Pancreas (tissue), 10 donors: ENCODE measurements at regions of chr1 and their contacts with region 1.

Region 1: GRCh38 chr1:119870917-119871596 is 25.3 kb downstream of the ADAM30 start:
- DNase-seq: peak; percentile 62 to 93 (median 80)
- ATAC-seq: peak; percentile 79 to 98 (median 96)
- H3K4me3 ChIP-seq: no peak overlapping the region
- H3K27ac ChIP-seq: no peak overlapping the region
- H3K4me1 ChIP-seq: no peaks in the 10 kb centered on the region
- H3K27me3 ChIP-seq: no peaks in the 10 kb centered on the region
- CTCF ChIP-seq: peak; percentile 70 to 90 (median 86)

Region 2: DNA sequence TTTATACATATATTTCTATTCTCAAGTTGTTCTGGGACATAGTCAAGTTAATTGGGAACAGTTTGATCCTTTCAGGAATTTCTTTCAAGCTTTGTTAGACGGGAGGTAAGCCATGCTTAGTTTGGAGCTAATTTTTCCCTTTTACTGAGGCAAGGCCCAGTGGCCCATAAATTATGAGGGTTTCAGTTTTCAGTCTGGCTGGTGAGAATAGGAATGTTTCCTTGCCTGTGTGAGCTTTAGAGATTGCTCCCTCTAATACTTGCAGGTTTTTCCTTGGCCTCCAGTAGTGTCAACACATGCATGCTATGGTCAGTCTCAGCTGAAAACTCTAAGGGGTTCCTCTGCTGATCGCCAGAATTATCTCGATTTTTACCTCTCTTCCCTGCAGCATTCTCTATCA is 173.5 kb before region 1 on chr1:
- intact Hi-C with region 1: no loop called
- DNase-seq: no peak
- ATAC-seq: no peak
- H3K4me3 ChIP-seq: no peak overlapping the region
- H3K27ac ChIP-seq: no peak overlapping the region
- H3K4me1 ChIP-seq: no peaks in the 10 kb centered on the region
- H3K27me3 ChIP-seq: no peaks in the 10 kb centered on the region
- CTCF ChIP-seq: no peak

Region 3: GRCh38 chr1:119743781-119744597 is 127.1 kb before region 1 on chr1:
- intact Hi-C with region 1: loop called in 1 of 3 experiments (anchors 10 kb)
- DNase-seq: peak in 5 of 6 donors; percentile 48 to 74 (median 60)
- ATAC-seq: peak; percentile 82 to 90 (median 88)
- H3K4me3 ChIP-seq: no peak overlapping the region
- H3K27ac ChIP-seq: no peak overlapping the region
- H3K4me1 ChIP-seq: no peaks in the 10 kb centered on the region
- H3K27me3 ChIP-seq: no peaks in the 10 kb centered on the region
- CTCF ChIP-seq: peak; percentile 60 to 79 (median 74)

Region 4: DNA sequence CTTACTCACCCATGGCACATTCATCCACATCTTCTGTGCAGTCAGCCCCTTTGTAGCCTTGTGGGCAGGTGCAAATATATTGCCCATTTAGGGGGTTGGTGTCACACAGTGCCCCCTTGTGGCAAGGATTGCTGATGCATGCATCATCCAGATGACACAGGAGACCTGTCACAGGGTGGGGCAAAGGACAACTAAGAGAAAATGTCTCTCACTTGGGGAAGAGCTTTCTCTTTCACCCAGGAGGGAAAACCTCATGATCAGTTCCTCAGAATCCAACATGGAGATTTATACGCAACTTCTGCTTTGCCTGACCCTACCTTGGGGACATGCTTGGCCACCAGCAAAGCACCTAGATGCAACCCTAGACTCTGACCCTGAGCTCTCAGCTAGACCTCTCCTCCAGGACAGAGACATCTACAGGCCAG is 97.0 kb after region 1 on chr1:
- intact Hi-C with region 1: loop called in 1 of 3 experiments (anchors 10 kb)
- DNase-seq: peak in 5 of 6 donors; percentile 32 to 85 (median 66)
- ATAC-seq: peak; percentile 74 to 92 (median 88)
- H3K4me3 ChIP-seq: no peak overlapping the region
- H3K27ac ChIP-seq: no peak overlapping the region
- H3K4me1 ChIP-seq: no peaks in the 10 kb centered on the region
- H3K27me3 ChIP-seq: no peaks in the 10 kb centered on the region
- CTCF ChIP-seq: peak; percentile 61 to 82 (median 78)